ENCODE measurements at regions of chr15 and their contacts with region 1.

Region 1: DNA sequence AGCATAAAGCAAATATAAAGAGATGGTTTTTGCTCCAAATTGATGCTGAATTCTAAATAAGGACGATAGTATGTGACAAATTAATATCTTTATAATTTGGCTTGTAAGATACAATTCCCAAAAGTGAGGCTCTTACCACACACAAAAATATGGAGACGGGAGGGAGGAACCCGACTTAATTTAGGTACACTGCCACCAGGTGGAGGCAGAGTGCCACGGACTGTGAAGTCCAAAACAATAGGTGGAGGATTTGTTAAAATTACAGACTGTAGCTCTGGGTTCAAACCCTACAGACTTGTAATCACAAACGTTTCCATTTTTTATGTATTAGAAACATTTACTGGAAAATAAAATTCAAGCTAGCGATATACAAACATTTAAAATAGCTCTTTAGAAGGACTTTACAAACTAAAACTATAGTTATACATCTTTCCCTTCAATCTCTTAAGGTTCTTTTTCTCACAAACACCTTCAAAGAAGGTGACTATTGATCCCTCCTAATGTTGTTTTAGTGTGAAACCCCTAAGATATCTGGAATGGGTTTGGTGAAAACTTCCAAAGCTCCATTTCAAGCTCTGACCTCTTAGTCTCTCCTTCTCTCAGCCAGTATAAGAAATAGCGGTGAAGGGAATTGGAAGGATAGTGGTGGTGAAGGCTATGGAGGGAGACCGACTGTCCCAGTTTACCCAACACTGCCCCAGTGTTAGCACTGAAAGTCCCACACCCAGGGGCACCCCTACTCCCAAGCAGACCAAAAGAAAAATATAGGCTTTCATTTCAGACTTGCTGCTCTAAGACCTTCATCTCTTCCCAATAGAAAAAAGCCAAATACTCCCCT is 89.7 kb downstream of the AQP9 start:
- DNase-seq: peak; percentile 65 to 87 (median 76)
- H3K4me3 ChIP-seq: no peak overlapping the region
- H3K27ac ChIP-seq: peak overlapping the region in 50 of 59 donors; percentile 46 to 96 (median 86)
- H3K27me3 ChIP-seq: no peaks in the 10 kb centered on the region
- CTCF ChIP-seq: peak; percentile 77 to 96 (median 89)

Region 2: GRCh38 chr15:58182460-58183163 is 45.3 kb before region 1 on chr15:
- intact Hi-C with region 1: no loop called
- DNase-seq: peak in 7 of 10 donors; percentile 7 to 69 (median 38)
- H3K4me3 ChIP-seq: no peak overlapping the region
- H3K27ac ChIP-seq: no peak overlapping the region
- H3K27me3 ChIP-seq: peaks cover 0 to 2% (median 0%) of the 10 kb centered on the region in 45 donors
- CTCF ChIP-seq: peak; percentile 14 to 94 (median 79)

Region 3: GRCh38 chr15:58331903-58332675 is 104.2 kb after region 1 on chr15:
- intact Hi-C with region 1: loop called in 1 of 2 experiments (anchors 5 kb)
- DNase-seq: peak; percentile 48 to 95 (median 88)
- H3K4me3 ChIP-seq: peak overlapping the region in 35 of 59 donors; percentile 0 to 42 (median 18)
- H3K27ac ChIP-seq: peak overlapping the region; percentile 63 to 96 (median 90)
- H3K27me3 ChIP-seq: no peaks in the 10 kb centered on the region
- CTCF ChIP-seq: peak in 5 of 56 donors; percentile 11 to 29 (median 18)

Region 4: GRCh38 chr15:58407376-58407775 is 179.5 kb after region 1 on chr15:
- intact Hi-C with region 1: loop called (anchors 5 to 10 kb)
- DNase-seq: peak in 5 of 10 donors; percentile 16 to 74 (median 47)
- H3K4me3 ChIP-seq: peak overlapping the region in 2 of 59 donors; percentile 3 to 11
- H3K27ac ChIP-seq: peak overlapping the region in 39 of 59 donors; percentile 2 to 80 (median 53)
- H3K27me3 ChIP-seq: no peaks in the 10 kb centered on the region
- CTCF ChIP-seq: peak in 13 of 56 donors; percentile 11 to 54 (median 23)

Region 5: DNA sequence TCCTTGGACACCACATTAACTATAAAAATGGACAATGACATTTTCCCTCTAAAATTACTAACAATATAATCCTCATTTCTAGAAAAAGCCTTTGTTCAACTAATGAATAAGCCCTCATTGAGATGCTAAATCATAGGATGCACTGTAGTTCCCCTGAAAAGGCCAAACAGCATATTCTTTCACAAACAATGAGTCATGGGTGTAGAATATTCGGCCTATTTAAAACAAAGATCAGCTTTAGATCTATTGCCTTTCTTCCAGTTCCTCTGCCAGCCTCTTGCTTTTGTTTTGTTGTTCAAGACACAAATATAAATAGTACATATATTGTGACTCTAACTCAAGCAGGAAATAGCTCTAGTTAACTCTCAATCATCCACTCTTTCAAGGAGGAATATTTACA is 439.0 kb after region 1 on chr15:
- intact Hi-C with region 1: loop called in 1 of 2 experiments (anchors 10 kb)
- DNase-seq: no peak
- H3K4me3 ChIP-seq: peak overlapping the region in 7 of 59 donors; percentile 6 to 33 (median 14)
- H3K27ac ChIP-seq: peak overlapping the region; percentile 40 to 98 (median 91)
- H3K27me3 ChIP-seq: no peaks in the 10 kb centered on the region
- CTCF ChIP-seq: peak in 4 of 56 donors; percentile 2 to 34 (median 16)

Region 6: GRCh38 chr15:58758138-58758537 is 530.2 kb after region 1 on chr15:
- intact Hi-C with region 1: loop called (anchors 5 kb)
- DNase-seq: no peak
- H3K4me3 ChIP-seq: no peak overlapping the region
- H3K27ac ChIP-seq: peak overlapping the region in 6 of 59 donors; percentile 8 to 50 (median 34)
- H3K27me3 ChIP-seq: no peaks in the 10 kb centered on the region
- CTCF ChIP-seq: peak in 52 of 56 donors; percentile 18 to 75 (median 54)

Region 7: GRCh38 chr15:58933281-58934113 is 705.6 kb after region 1 on chr15 and contains the start of gene SLTM:
- intact Hi-C with region 1: loop called (anchors 5 to 10 kb)
- DNase-seq: peak; percentile 77 to 93 (median 88)
- H3K4me3 ChIP-seq: peak within 1 kb of the TSS; percentile 53 to 97 (median 82)
- H3K27ac ChIP-seq: peak within 1 kb of the TSS; percentile 93 to 100 (median 99)
- H3K27me3 ChIP-seq: no peaks in the 10 kb centered on the region
- CTCF ChIP-seq: peak in 45 of 56 donors; percentile 3 to 70 (median 40)
- total RNA-seq, gene SLTM: 60.6 to 122 (median 90.8) TPM